Activated B cell treated with CpG ODN at 0.5 μM for 24 hours (primary cell): ENCODE measurements at regions of chr20 and their contacts with region 1.

Region 1: DNA sequence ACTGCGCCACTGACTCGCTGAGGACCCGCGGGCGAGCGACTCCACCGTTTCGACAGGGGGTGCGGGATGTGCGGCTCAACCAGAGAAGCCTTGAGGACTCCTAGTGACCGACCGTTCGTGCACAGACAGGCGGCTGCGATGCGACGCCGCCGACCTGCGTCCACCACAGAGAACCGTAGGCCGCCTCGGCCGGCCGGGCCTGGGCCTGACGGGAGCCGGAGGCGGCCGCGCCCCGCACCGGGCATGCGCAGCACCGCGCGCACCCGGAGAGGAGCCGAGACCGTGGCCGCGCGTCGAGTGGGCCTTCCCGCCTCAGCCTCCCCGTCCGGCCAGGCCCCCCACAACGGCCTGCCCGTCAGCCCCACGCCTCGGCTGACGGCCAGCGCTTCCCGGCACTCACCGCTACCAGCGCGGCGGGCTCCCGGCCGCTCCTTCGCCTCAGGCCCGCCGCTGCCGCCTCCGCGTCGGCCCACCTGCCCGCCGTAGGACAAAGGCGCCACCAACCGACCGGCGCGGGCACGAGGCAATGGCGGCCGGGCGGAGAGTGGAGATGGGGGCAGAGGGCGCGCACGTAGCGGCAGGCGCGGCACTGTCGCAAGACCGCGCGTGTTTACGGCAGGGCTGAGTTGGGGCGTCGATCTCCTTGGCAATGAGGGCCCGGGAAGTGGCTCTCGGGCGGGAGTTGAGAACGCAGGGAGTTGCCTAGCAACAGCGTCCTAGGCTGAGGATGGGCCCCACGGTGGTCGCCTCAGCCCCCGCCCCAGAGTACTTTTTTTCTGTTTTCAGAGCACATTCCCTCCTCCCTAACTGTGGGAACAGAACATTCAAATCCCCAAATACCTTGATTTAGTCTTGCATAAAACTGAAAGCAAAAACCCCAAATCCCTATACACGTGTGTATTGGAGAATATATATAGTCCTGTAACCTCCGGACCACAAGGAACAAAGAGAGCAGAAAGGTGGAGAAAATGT is at the start of gene NCOA5:
- DNase-seq: peak; percentile 93
- ATAC-seq: peak; percentile 91
- H3K4me3 Mint-ChIP-seq: peak within 1 kb of the TSS; percentile 90
- H3K27ac Mint-ChIP-seq: peak within 1 kb of the TSS; percentile 89
- H3K4me1 Mint-ChIP-seq: peaks cover 53% of the 10 kb centered on the region
- H3K27me3 Mint-ChIP-seq: no peaks in the 10 kb centered on the region
- CTCF ChIP-seq: no peak
- total RNA-seq, gene NCOA5: 46.4 and 53.1 TPM in 2 replicates

Region 2: DNA sequence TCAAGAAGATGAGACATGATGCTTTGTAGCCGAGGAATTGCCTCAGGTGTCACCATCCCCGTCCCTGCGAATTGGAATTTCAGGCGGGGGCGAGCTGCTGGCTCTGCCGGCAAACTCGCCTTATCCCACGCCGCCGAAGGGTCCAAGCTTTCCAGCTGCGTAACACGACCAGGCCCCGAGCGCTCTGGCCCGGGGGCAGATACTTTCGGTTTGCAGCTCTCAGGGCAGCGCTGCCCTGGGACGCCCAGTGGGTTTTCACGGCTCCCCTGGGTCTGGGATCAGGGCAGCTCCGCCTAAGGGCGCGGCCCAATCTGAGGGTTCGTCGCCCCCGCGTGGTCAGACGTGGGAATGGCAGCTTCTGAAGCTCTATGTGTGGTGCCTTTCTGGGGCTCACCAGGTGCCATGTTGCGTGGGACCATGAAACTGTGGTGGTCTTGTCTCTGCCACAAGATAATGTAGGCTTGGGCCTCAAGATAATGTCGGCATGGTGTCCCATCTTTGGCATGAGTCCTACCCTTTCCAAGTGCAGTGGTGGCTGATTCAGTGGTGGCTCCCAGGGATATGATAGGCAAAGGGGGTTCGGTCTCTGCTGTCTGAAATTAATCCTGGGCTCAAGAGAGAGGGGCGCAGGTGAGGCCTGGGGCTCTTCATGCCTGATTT is 652.8 kb before region 1 on chr20:
- CTCF ChIA-PET with region 1: no interaction called
- POLR2A ChIA-PET with region 1: no interaction called
- intact Hi-C with region 1: no loop called
- DNase-seq: peak; percentile 84
- ATAC-seq: peak; percentile 91
- H3K4me3 Mint-ChIP-seq: peak overlapping the region; percentile 86
- H3K27ac Mint-ChIP-seq: peak overlapping the region; percentile 68
- H3K4me1 Mint-ChIP-seq: peaks cover 39% of the 10 kb centered on the region
- H3K27me3 Mint-ChIP-seq: no peaks in the 10 kb centered on the region
- CTCF ChIP-seq: peak; percentile 60

Region 3: DNA sequence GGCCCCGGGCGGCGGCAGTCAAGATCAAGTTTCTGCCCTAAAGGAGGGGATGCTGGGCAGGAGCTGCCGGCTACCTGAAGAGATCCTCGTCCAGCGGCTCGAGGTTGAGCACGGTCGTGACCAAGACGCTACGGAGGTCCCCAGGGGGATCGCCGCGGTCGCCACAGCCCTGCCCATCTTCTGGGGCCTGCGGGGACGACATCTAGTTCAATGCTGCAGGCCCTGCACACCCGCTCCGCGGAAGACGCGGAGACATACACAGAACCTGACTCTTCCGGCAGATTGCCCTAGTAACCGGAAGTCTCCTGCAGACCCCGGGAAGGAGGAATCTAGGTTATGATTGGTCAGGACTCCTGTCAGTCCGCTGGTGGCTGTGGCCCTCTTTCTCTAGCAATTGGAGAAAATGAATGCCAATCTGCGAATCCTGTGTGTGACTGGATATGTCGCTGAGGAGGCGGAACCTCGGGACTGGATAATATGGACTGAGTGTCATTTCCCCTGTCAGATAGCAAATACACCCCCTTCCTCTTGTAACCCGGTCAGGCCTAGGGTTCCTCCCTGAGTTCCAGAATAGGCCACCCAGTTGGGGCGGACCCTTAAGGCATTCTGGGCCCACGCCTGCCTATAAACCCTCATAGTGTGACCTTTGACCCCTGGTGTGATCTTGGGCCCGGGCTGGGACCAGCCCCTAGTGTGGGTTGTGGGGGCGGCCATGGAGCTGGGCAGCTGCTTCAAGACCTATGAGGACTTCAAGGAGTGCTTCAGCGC is 232.4 kb before region 1 on chr20 and contains the starts of genes ACOT8 and ZSWIM3:
- CTCF ChIA-PET with region 1: no interaction called
- POLR2A ChIA-PET with region 1: no interaction called
- intact Hi-C with region 1: loop called (anchors 1 kb)
- DNase-seq: peak; percentile 67
- ATAC-seq: peak; percentile 98
- H3K4me3 Mint-ChIP-seq: peak within 1 kb of the TSS; percentile 94
- H3K27ac Mint-ChIP-seq: peak within 1 kb of the TSS; percentile 94
- H3K4me1 Mint-ChIP-seq: peaks cover 48% of the 10 kb centered on the region
- H3K27me3 Mint-ChIP-seq: no peaks in the 10 kb centered on the region
- CTCF ChIP-seq: no peak
- total RNA-seq, gene ACOT8: 24.5 and 27.3 TPM in 2 replicates
- total RNA-seq, gene ZSWIM3: 5.9 and 6.4 TPM in 2 replicates

Region 4: DNA sequence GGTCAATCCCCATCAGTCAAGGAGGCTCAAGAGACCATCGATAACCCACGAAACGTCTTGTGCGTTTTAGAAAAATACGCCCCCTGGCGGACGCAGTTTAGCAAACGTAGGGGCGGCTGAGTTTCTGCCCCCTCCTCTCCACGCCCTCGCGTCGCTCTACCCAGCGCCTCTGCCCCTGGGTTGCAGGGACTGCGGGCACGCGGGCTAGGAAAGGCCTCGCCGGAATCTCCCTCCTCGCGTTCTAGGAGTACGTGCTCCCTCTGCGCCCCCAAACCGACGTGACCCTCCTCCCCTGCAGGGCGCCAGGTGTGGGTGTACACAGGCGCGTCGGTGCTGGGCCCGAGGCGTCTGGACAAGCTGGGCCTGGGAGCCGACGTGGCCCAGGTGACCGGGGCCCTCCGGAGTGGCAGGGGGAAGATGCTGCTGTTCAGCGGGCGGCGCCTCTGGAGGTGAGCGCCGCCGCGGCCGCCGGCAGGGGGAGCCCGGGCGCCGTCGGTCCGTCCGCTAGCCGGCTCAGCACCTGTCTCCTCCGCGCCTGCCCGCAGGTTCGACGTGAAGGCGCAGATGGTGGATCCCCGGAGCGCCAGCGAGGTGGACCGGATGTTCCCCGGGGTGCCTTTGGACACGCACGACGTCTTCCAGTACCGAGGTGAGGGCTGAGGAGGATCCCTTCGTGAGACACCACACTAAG is 75.7 kb before region 1 on chr20:
- CTCF ChIA-PET with region 1: no interaction called
- POLR2A ChIA-PET with region 1: no interaction called
- intact Hi-C with region 1: loop called (anchors 2 kb)
- DNase-seq: peak; percentile 73
- ATAC-seq: peak; percentile 90
- H3K4me3 Mint-ChIP-seq: peak overlapping the region; percentile 16
- H3K27ac Mint-ChIP-seq: peak overlapping the region; percentile 53
- H3K4me1 Mint-ChIP-seq: peaks cover 47% of the 10 kb centered on the region
- H3K27me3 Mint-ChIP-seq: peaks cover 47% of the 10 kb centered on the region
- CTCF ChIP-seq: peak; percentile 44

Region 5: DNA sequence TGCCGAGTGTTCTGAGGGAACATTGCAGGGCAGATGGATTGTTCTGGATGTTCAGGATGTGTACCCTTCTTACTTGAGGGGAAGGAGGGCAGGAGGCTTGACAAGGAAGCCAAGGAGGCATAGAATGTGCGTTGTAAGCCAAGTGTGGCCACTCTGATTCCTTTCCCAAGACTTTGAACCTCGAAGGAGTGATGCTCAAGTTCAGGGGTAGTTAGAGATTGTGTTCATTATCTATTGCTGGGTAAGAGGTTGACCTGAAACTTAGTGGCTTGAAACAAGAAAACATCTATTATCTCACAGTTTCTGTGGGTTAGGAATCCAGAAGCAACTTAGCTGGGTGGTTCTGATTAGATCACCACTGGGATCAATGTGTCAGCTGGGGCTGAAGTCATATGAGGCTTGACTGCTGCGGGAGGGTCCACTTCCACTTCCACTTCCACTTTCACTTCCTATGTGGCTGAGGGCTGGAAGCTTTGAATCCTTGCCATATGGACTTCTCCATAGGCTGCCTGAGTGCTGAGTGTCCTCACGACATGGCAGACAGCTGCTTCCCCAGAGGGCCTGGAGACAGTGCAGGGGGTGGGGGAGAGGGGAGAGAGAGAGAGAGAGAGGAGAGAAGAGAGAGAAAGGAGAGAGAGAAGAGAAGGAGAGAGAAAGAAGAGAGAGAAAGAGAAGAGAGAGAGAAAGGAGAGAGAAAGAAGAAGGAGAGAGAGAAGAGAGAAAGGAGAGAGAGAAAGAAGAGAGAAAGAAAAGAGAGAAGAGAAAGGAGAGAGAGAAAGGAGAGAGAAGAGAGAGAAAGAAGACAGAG is 21.5 kb after region 1 on chr20:
- CTCF ChIA-PET with region 1: interaction called, 3 read pairs
- POLR2A ChIA-PET with region 1: interaction called, 10 read pairs
- intact Hi-C with region 1: loop called (anchors 1 kb)
- DNase-seq: no peak
- ATAC-seq: peak; percentile 53
- H3K4me3 Mint-ChIP-seq: peak overlapping the region; percentile 54
- H3K27ac Mint-ChIP-seq: peak overlapping the region; percentile 79
- H3K4me1 Mint-ChIP-seq: peaks cover 75% of the 10 kb centered on the region
- H3K27me3 Mint-ChIP-seq: no peaks in the 10 kb centered on the region
- CTCF ChIP-seq: no peak